ENCODE measurements at regions of chr2 and their contacts with region 1.

Region 1: DNA sequence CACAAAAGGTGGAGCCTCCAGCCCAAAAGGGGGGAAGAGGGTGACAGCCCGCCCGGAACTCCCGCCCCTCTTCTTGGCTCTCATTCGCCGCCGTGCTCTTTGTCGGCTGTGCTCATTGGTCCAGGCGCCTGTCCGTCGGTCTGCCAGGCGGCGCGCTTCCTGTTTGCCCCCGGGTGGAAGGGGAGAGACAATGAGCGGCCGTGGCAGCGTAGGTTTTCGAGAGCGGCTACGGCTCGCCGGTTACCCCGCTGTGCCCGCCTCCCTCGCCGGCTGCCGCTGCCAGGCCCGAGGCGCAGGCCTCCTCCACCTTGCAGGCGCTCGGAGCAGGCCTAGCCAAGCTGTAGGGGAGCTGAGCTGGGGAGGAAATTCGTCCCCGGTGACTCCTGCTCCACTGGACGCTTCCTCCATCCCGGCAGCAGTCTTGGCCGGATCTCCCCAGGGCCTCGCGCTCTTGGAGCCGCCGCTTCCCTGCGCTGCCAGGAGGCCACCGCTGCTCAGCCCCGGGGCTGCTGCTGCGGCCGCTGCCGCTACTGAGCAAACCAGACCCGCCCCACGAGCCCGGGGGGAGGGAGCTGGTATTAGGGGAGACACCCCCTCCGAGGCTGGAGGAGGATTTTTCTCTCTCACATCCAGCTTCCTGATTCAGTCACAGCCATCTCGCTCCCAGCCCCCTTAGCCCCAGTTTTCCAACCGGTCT is at the start of gene SP3:
- DNase-seq: peak; percentile 98
- H3K4me3 ChIP-seq: peak within 1 kb of the TSS; percentile 98 to 99
- H3K27ac ChIP-seq: peak within 1 kb of the TSS; percentile 100
- H3K4me1 ChIP-seq: peaks cover 12% of the 10 kb centered on the region
- H3K27me3 ChIP-seq: no peaks in the 10 kb centered on the region
- CTCF ChIP-seq: peak in 1 of 3 experiments; percentile 22
- POLR2A ChIP-seq: peak; percentile 91
- total RNA-seq, gene SP3: 135 to 142 TPM

Region 2: GRCh38 chr2:174012347-174013314 is 47.2 kb after region 1 on chr2:
- intact Hi-C with region 1: loop called (anchors 10 kb)
- DNase-seq: peak; percentile 73
- H3K4me3 ChIP-seq: peak overlapping the region; percentile 52 to 65
- H3K27ac ChIP-seq: peak overlapping the region; percentile 92 to 95
- H3K4me1 ChIP-seq: peaks cover 16% of the 10 kb centered on the region
- H3K27me3 ChIP-seq: no peaks in the 10 kb centered on the region
- CTCF ChIP-seq: no peak
- POLR2A ChIP-seq: no peak

Measured in testis (tissue), 5 donors.